ENCODE measurements at regions of chr21 and their contacts with region 1.

Region 1: DNA sequence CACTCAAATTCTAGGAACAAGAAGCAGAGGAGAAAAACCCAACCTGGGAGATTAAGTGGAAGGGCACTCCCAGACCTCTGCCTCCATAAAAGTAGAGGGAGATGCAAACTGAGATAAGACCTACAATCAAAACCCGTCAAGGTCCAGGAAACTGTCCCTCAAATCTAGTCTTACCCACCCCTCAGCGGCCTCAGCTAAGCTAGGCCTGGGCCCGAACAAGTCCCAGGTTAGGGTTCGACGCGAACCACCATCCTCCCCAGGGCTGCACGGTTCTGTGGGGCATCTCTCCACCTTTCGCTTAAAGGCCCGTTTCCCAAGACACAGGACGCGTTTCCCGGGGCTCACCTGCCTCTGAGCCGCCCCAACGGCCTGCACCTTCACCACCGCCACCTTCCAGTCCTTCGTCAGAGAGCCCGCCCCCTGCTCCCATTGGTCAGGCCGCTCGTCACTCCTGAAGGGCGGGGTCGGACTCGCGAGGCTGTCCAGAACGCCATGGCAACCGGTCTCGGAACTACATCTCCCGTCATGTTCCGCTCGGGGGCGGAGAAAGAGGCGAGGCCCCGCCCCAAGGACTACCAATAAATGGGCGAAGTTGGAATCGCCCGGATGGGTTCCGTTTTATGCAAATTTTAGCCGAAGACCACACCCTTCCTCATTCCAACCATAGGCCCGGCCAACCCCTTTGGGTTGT is at the start of gene CRYZL1:
- DNase-seq: peak; percentile 100
- H3K4me3 Mint-ChIP-seq: peak within 1 kb of the TSS; percentile 89
- H3K27ac Mint-ChIP-seq: peak within 1 kb of the TSS; percentile 96
- H3K4me1 Mint-ChIP-seq: peaks cover 14% of the 10 kb centered on the region
- H3K27me3 Mint-ChIP-seq: peaks cover 23% of the 10 kb centered on the region
- total RNA-seq, gene CRYZL1: 25.6 and 34.8 TPM in 2 replicates

Region 2: DNA sequence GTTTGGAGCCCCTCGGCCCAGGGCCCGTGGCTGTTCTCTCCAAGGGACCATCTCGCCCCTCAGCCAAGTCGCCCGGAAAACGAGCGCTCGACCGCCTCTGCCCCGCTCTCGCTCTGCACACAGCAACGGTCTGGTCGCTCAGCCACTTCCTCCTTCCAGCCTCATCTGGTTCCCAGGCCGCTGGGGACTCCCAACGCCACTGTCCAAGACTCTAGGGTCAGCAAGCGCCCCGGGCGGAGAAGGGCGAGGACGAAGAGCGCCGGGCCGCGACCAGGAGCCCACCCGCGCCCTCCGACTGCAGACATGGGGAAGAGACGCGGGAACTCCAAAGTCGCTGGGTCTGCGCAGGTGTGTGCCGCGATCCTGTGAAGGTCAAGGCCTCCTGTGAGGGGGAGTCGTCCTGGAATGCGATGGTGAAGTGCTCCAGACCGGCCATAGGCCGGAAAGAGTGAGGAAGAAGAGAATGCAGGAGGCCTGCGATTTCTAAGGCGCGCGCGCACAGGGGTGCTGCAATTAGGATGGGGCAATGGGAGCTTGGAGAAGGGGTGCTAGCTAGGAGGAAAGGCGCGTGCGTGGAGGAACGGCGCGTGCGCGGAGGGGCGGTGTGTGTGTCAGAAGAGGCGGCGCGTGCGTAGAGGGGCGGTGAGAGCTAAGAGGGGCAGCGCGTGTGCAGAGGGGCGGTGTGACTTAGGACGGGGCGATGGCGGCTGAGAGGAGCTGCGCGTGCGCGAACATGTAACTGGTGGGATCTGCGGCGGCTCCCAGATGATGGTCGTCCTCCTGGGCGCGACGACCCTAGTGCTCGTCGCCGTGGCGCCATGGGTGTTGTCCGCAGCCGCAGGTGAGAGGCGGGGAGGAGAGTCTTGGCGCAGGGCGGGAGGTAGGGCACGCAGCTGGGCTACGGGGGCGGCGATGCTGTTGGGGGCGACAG is 316.9 kb before region 1 on chr21 and contains the start of gene IFNAR1:
- intact Hi-C with region 1: loop called (anchors 1 kb)
- DNase-seq: peak; percentile 98
- H3K4me3 Mint-ChIP-seq: no peak within 1 kb of the TSS
- H3K27ac Mint-ChIP-seq: no peak within 1 kb of the TSS
- H3K4me1 Mint-ChIP-seq: peaks cover 23% of the 10 kb centered on the region
- H3K27me3 Mint-ChIP-seq: peaks cover 6% of the 10 kb centered on the region
- total RNA-seq, gene IFNAR1: 20.4 and 20.7 TPM in 2 replicates

Region 3: GRCh38 chr21:33479679-33480480 is 161.6 kb before region 1 on chr21 and contains the start of gene TMEM50B:
- intact Hi-C with region 1: loop called (anchors 1 kb)
- DNase-seq: peak; percentile 93
- H3K4me3 Mint-ChIP-seq: peak within 1 kb of the TSS; percentile 88
- H3K27ac Mint-ChIP-seq: peak within 1 kb of the TSS; percentile 84
- H3K4me1 Mint-ChIP-seq: peaks cover 23% of the 10 kb centered on the region
- H3K27me3 Mint-ChIP-seq: peaks cover 6% of the 10 kb centered on the region
- total RNA-seq, gene TMEM50B: 12.0 and 14.0 TPM in 2 replicates

Region 4: DNA sequence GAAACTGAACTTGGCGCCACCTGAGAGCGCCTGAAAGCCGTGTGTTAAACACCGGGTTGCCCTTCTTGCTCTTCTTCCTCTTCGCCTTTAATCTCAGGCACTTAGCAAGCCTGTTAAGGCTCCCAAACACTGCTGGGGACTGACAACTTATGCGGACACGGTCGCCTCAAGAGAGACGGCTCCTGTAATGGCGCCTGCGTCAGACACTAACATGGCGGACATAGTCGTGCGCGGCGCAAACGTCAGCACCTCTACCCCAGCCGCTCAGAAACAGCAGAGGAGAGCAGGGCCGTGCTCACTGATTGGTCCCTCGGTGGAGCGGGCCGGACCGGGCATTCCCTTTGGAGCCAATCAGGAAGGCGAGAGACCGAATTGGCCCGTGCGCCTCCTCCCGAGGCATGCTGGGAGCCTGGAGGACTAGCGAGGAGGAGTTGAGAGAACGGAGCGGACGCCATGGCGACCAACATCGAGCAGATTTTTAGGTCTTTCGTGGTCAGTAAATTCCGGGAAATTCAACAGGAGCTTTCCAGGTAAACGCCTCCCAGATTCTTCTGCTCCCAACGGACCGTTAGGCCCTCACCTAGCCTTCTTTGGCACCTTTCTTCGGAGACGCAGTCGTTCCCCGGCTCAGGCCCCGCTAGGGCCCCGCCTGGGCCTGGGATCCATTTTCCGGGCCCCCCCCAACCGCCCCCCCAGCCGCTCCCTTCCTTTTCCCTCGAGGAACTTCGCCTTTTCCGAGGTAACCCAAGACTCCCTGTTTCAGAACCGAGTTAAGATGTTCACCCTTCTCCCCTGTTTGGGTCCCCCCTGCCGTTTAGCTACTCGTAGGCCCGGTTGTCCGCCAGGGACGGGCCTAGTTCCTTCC is 98.6 kb before region 1 on chr21 and contains the start of gene SON:
- intact Hi-C with region 1: loop called (anchors 1 kb)
- DNase-seq: peak; percentile 98
- H3K4me3 Mint-ChIP-seq: peak within 1 kb of the TSS; percentile 93
- H3K27ac Mint-ChIP-seq: peak within 1 kb of the TSS; percentile 99
- H3K4me1 Mint-ChIP-seq: peaks cover 43% of the 10 kb centered on the region
- H3K27me3 Mint-ChIP-seq: no peaks in the 10 kb centered on the region
- total RNA-seq, gene SON: 342 and 361 TPM in 2 replicates

Region 5: DNA sequence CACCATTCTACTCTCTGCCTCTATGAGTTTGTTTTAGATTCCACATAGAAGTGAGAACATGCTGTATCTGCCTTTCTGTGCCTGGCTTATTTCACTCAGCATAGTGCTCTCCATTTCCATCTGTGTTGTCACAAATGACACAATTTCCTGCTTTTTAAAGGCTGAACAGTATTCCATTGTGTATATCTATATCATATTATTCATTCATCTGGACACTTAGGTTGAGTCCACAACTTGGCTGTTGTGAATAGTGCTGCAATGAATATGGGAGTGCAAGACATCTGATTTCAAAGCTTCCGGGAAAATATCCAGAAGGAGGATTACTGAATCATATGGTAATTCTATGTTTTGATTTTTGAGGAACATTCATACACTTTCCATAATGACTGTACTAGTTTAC is 32.9 kb before region 1 on chr21:
- intact Hi-C with region 1: loop called (anchors 1 kb)
- DNase-seq: no peak
- H3K4me3 Mint-ChIP-seq: no peak overlapping the region
- H3K27ac Mint-ChIP-seq: no peak overlapping the region
- H3K4me1 Mint-ChIP-seq: no peaks in the 10 kb centered on the region
- H3K27me3 Mint-ChIP-seq: no peaks in the 10 kb centered on the region

Region 6: DNA sequence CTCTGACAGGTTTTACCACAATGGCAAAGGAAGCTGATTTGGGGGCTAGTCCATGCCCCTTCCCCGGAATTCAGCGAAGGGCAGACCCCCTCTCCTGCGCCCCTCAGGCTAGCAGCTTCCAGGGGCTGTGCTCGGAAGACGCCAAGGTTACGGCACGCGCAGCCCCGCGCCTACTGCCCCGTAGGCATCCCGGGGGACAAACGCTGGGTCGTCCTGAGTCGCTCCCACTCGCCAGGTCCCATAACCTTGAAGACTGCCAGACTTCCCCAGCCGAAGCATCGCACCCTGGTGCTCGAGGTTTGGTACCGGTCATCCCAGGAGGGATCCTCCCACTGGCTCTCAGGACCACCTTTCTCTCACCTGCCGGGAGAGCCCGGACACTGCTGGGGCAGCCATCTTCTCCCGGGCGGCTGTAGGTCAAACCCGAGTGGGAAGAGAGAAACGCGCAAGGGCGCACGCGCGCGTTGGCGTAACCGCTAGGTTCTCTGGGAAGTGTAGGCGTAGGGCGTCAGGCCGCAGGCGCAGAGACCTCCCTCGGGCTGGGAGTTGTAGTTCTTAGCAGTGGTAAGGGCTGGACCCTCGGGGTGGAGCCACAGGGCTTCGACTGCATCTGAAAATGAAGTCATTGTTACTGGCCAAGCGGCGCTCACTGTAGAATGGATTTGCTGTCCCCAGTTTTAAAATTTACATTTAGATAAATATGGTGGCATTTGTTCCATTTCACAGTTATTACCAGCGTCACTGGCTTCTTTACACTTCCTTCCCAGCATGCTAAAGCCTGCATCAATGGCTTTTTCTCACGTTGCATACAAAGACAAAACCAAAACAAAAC is 274.1 kb after region 1 on chr21 and contains the start of gene ATP5PO:
- intact Hi-C with region 1: loop called (anchors 1 kb)
- DNase-seq: peak; percentile 97
- H3K4me3 Mint-ChIP-seq: peak within 1 kb of the TSS; percentile 99
- H3K27ac Mint-ChIP-seq: peak within 1 kb of the TSS; percentile 98
- H3K4me1 Mint-ChIP-seq: peaks cover 39% of the 10 kb centered on the region
- H3K27me3 Mint-ChIP-seq: no peaks in the 10 kb centered on the region
- total RNA-seq, gene ATP5PO: 168 and 176 TPM in 2 replicates

Region 7: DNA sequence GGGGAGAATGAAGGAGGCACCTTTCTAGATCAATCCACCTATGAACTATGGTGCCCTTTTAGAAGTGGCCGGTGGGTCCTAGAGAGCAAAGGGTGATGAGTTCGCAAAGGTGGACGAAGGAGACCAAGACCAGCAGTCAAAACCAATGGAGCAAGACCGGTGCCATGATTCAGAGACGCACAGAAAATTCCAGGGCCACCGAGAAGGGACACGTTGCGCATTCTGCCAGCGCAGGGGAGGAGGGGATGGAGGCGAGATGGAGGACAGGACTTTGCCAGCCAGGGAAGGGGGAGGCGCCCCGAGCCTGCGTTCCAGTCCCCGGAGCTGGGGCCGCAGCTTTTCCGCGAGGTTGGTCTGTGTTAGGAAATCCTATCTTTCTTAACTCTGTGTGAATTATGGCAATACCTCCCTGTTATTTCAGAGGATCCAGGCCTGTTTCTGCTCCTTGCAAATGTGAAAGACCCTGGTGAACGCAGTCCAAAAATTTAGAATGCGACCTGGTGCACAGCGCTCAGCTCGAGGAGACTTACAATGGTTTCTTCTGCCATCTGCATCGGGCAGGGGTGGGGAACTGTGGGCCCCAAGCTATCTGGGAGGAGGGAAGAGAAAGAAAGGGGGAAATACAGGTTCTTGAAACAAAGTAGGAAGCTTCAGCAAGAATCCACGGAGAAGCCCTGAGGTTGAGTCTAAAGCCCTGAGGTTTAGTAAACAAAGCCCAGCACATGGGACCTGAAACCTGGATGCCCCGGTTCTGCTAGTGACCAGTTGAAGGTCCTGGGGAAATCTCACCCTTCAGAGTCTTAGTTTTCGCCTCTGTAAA is 561.3 kb after region 1 on chr21:
- intact Hi-C with region 1: loop called (anchors 10 kb)
- DNase-seq: no peak
- H3K4me3 Mint-ChIP-seq: no peak overlapping the region
- H3K27ac Mint-ChIP-seq: peak overlapping the region; percentile 48
- H3K4me1 Mint-ChIP-seq: peaks cover 71% of the 10 kb centered on the region
- H3K27me3 Mint-ChIP-seq: no peaks in the 10 kb centered on the region

Measured in activated T-helper 1 cell treated with anti-CD3 and anti-CD28 coated beads, Interleukin-12 subunit alpha, Interleukin-12 subunit beta, Interleukin-2, Interleukin-4 antibody, amounts not matched to agents 30 ng/mL and 10 ng/mL and 1 ng/mL, durations not matched to agents 14 hours and 24 hours and 36 hours (primary cell).